Naive thymus-derived CD4-positive, alpha-beta T cell (primary cell): ENCODE measurements at regions of chr7 and their contacts with region 1.

Region 1: GRCh38 chr7:75914730-75915585 is at the start of gene POR:
- DNase-seq: peak; percentile 93 to 100 (median 99)
- ATAC-seq: peak; percentile 99
- H3K4me3 ChIP-seq: peak within 1 kb of the TSS; percentile 79
- H3K4me3 Mint-ChIP-seq: peak within 1 kb of the TSS; percentile 91 to 94 (median 92)
- H3K27ac ChIP-seq: peak within 1 kb of the TSS; percentile 100
- H3K27ac Mint-ChIP-seq: peak within 1 kb of the TSS; percentile 94 to 99 (median 98)
- H3K4me1 ChIP-seq: peaks cover 12 to 19% of the 10 kb centered on the region in 2 donors
- H3K4me1 Mint-ChIP-seq: peaks cover 18 to 50% (median 35%) of the 10 kb centered on the region in 7 donors
- H3K27me3 ChIP-seq: no peaks in the 10 kb centered on the region
- H3K27me3 Mint-ChIP-seq: peaks cover 0 to 3% (median 0%) of the 10 kb centered on the region in 5 donors
- total RNA-seq, gene POR: 45.9 to 72.3 (median 69.7) TPM

Region 2: GRCh38 chr7:74173866-74174605 is 1740.9 kb before region 1 on chr7 and contains the start of gene EIF4H:
- CTCF ChIA-PET with region 1: no interaction called
- POLR2A ChIA-PET with region 1: no interaction called
- intact Hi-C with region 1: loop called in 1 of 2 experiments (anchors 5 kb)
- DNase-seq: peak; percentile 90 to 97 (median 95)
- ATAC-seq: peak; percentile 97
- H3K4me3 ChIP-seq: peak within 1 kb of the TSS; percentile 87
- H3K4me3 Mint-ChIP-seq: peak within 1 kb of the TSS; percentile 86 to 98 (median 92)
- H3K27ac ChIP-seq: peak within 1 kb of the TSS; percentile 99
- H3K27ac Mint-ChIP-seq: peak within 1 kb of the TSS; percentile 88 to 97 (median 94)
- H3K4me1 ChIP-seq: peaks cover 41 to 43% of the 10 kb centered on the region in 2 donors
- H3K4me1 Mint-ChIP-seq: peaks cover 32 to 57% (median 47%) of the 10 kb centered on the region in 7 donors
- H3K27me3 ChIP-seq: no peaks in the 10 kb centered on the region
- H3K27me3 Mint-ChIP-seq: no peaks in the 10 kb centered on the region
- total RNA-seq, gene EIF4H: 163 to 284 (median 223) TPM

Region 3: GRCh38 chr7:75565132-75565837 is 349.7 kb before region 1 on chr7:
- CTCF ChIA-PET with region 1: no interaction called
- POLR2A ChIA-PET with region 1: no interaction called
- intact Hi-C with region 1: no loop called
- DNase-seq: no peak
- ATAC-seq: no peak
- H3K4me3 ChIP-seq: no peak overlapping the region
- H3K4me3 Mint-ChIP-seq: no peak overlapping the region
- H3K27ac ChIP-seq: no peak overlapping the region
- H3K27ac Mint-ChIP-seq: no peak overlapping the region
- H3K4me1 ChIP-seq: no peaks in the 10 kb centered on the region
- H3K4me1 Mint-ChIP-seq: peaks cover 0 to 3% (median 0%) of the 10 kb centered on the region in 7 donors
- H3K27me3 ChIP-seq: no peaks in the 10 kb centered on the region
- H3K27me3 Mint-ChIP-seq: no peaks in the 10 kb centered on the region

Region 4: DNA sequence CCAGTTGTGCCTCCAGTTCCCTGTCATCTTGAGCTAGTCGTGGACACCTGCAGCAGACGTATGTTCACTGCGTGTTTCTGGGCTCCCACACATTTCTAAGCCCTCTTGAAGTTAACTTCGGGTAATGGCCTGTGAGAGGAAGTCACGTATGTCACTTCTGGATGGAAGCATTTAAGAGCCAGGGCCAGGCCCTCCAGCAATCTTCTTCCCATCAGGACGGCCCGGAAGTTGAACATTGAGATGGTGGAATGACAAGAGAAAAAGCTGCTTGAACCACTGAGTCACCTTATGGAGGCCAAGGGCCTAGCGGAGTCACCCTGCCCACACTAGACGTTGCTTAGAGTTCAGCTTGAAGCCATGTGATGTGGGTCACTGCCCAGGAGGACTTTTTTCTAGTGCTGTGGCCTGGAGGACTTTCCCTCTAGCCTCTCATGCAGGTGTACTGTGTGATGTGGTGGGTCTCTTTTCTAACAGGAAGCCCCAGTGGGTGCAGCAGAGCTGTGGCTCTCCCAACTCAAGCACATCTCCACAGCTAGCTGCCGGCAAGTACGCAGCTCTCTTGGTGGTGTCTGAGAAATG is 13.5 kb after region 1 on chr7:
- CTCF ChIA-PET with region 1: no interaction called
- POLR2A ChIA-PET with region 1: interaction called, 17 read pairs
- intact Hi-C with region 1: loop called in 1 of 2 experiments (anchors 2 kb)
- DNase-seq: peak in 7 of 9 donors; percentile 13 to 63 (median 44)
- ATAC-seq: peak; percentile 90
- H3K4me3 ChIP-seq: no peak overlapping the region
- H3K4me3 Mint-ChIP-seq: peak overlapping the region; percentile 17 to 75 (median 51)
- H3K27ac ChIP-seq: no peak overlapping the region
- H3K27ac Mint-ChIP-seq: peak overlapping the region; percentile 58 to 91 (median 83)
- H3K4me1 ChIP-seq: peaks cover 8 to 18% of the 10 kb centered on the region in 2 donors
- H3K4me1 Mint-ChIP-seq: peaks cover 21 to 49% (median 30%) of the 10 kb centered on the region in 7 donors
- H3K27me3 ChIP-seq: no peaks in the 10 kb centered on the region
- H3K27me3 Mint-ChIP-seq: no peaks in the 10 kb centered on the region

Region 5: GRCh38 chr7:75994388-75995051 is 79.6 kb after region 1 on chr7 and contains the start of gene TMEM120A:
- CTCF ChIA-PET with region 1: no interaction called
- POLR2A ChIA-PET with region 1: interaction called, 5 read pairs
- intact Hi-C with region 1: loop called (anchors 1 kb)
- DNase-seq: peak; percentile 87 to 98 (median 92)
- ATAC-seq: peak; percentile 99
- H3K4me3 ChIP-seq: peak within 1 kb of the TSS; percentile 84
- H3K4me3 Mint-ChIP-seq: peak within 1 kb of the TSS; percentile 62 to 82 (median 76)
- H3K27ac ChIP-seq: peak within 1 kb of the TSS; percentile 80
- H3K27ac Mint-ChIP-seq: peak within 1 kb of the TSS in 5 of 9 donors; percentile 48 to 65 (median 55)
- H3K4me1 ChIP-seq: peaks cover 6 to 10% of the 10 kb centered on the region in 2 donors
- H3K4me1 Mint-ChIP-seq: peaks cover 12 to 37% (median 34%) of the 10 kb centered on the region in 7 donors
- H3K27me3 ChIP-seq: no peaks in the 10 kb centered on the region
- H3K27me3 Mint-ChIP-seq: no peaks in the 10 kb centered on the region
- total RNA-seq, gene TMEM120A: 19.1 to 38.6 (median 35.6) TPM

Region 6: GRCh38 chr7:76008156-76008687 is 93.3 kb after region 1 on chr7:
- CTCF ChIA-PET with region 1: no interaction called
- POLR2A ChIA-PET with region 1: interaction called, 5 read pairs
- intact Hi-C with region 1: loop called in 1 of 2 experiments (anchors 2 kb)
- DNase-seq: peak in 1 of 9 donors; percentile 38
- ATAC-seq: no peak
- H3K4me3 ChIP-seq: no peak overlapping the region
- H3K4me3 Mint-ChIP-seq: peak overlapping the region in 8 of 10 donors; percentile 1 to 85 (median 65)
- H3K27ac ChIP-seq: no peak overlapping the region
- H3K27ac Mint-ChIP-seq: peak overlapping the region in 6 of 9 donors; percentile 6 to 91 (median 58)
- H3K4me1 ChIP-seq: peaks cover 15 to 25% of the 10 kb centered on the region in 2 donors
- H3K4me1 Mint-ChIP-seq: peaks cover 22 to 37% (median 29%) of the 10 kb centered on the region in 7 donors
- H3K27me3 ChIP-seq: no peaks in the 10 kb centered on the region
- H3K27me3 Mint-ChIP-seq: peaks cover 0 to 2% (median 0%) of the 10 kb centered on the region in 5 donors

Region 7: DNA sequence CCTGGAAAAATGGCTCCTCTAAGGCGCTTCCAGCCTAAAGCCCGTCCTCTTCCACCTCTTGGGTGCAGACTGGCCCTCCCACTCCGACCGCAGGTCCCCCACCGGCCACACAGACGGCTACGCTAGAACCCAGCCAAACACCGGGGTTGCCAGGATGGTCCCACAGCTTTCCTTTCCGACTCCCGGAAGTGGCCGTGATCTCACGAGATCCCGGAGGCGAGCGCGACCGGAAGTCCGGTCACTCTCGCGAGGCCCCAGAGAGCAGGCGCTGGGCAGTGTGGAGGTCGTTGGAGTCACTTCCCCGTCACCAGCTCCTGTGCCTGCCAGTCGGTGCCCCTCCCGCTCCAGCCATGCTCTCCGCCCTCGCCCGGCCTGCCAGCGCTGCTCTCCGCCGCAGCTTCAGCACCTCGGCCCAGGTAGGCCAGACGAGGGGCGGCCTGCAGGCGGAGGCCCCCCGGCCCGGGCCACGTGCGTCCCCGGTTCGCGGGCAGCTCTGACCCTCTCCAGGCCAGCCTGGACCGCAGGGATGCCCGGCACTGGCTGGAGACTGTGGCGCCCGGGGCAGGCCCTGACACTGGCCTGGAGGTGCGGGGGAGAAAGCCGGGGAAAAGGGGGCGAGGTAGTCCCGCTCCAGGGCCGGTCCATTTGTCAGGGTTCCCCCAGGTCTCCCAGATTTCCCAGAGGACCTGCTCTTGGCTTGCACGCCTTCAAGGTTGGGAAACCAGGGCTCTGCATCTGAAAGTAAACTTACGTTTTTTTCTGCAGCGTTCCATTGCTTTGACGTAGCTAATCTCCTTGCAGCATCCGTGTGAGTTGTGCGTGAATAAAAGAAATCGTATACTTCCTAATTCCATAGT is 133.1 kb after region 1 on chr7 and contains the starts of genes MDH2 and STYXL1:
- CTCF ChIA-PET with region 1: no interaction called
- POLR2A ChIA-PET with region 1: interaction called, 9 read pairs
- intact Hi-C with region 1: loop called in 1 of 2 experiments (anchors 2 kb)
- DNase-seq: peak; percentile 68 to 89 (median 76)
- ATAC-seq: peak; percentile 92
- H3K4me3 ChIP-seq: peak within 1 kb of the TSS; percentile 95
- H3K4me3 Mint-ChIP-seq: peak within 1 kb of the TSS; percentile 90 to 99 (median 97)
- H3K27ac ChIP-seq: peak within 1 kb of the TSS; percentile 80
- H3K27ac Mint-ChIP-seq: peak within 1 kb of the TSS; percentile 92 to 98 (median 97)
- H3K4me1 ChIP-seq: peaks cover 7 to 17% of the 10 kb centered on the region in 2 donors
- H3K4me1 Mint-ChIP-seq: peaks cover 36 to 70% (median 53%) of the 10 kb centered on the region in 7 donors
- H3K27me3 ChIP-seq: no peaks in the 10 kb centered on the region
- H3K27me3 Mint-ChIP-seq: no peaks in the 10 kb centered on the region
- total RNA-seq, gene MDH2: 71.7 to 172 (median 74.6) TPM
- total RNA-seq, gene STYXL1: 11.3 to 31.7 (median 20.0) TPM